Naive thymus-derived CD4-positive, alpha-beta T cell (primary cell): ENCODE measurements at regions of chr11 and their contacts with region 1.

Region 1: DNA sequence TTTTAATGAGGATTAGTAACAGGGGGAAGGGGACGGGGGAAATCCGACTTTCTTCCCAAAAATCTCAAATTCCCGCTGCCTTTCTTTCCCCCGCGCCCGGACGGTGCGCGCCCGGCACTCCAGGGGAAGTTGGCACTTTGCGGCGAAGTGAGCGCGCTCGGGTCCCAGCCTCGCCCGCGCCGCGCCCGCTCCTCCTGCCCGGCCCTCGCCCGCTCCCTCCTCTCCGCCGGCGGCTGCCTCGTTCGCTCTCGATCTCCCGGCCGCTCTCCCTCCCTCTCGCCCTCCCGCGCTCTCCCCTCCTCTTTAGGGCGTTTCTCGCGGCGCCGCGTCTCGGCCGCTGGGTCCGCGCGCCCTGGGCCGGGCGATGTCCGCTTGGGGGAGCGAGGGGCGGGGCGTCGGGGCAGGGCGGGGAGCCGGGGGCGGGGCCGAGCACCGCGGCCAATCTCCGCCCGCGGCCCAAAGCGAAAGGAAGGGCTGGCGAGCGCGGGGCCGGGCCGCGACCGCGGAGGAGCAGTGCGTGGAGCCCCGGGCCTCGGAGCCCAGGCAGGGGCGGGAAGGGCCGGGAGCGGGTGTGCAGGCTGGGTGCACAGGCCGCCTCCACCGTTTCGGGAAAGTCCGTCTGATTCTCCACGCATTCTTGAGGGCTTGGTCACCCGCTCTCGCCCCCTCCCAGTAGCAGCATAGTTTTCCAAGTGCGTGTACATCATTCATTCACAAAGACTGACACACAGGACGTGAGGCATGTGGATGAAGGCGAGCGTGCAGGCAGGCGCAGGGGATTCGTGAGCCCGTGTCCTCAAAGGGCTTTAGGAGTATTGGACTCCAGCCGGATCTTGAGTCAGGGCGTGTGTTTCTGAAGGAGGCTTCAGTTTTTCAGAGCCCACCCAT is 65.1 kb downstream of the ETS1 start:
- DNase-seq: peak; percentile 67 to 95 (median 84)
- ATAC-seq: peak; percentile 87
- H3K4me3 ChIP-seq: peak overlapping the region; percentile 96
- H3K4me3 Mint-ChIP-seq: peak overlapping the region; percentile 94 to 100 (median 98)
- H3K27ac ChIP-seq: peak overlapping the region; percentile 97
- H3K27ac Mint-ChIP-seq: peak overlapping the region; percentile 94 to 99 (median 98)
- H3K4me1 ChIP-seq: peaks cover 36 to 43% of the 10 kb centered on the region in 2 donors
- H3K4me1 Mint-ChIP-seq: peaks cover 35 to 52% (median 45%) of the 10 kb centered on the region in 7 donors
- H3K27me3 ChIP-seq: no peaks in the 10 kb centered on the region
- H3K27me3 Mint-ChIP-seq: peaks cover 0 to 3% (median 0%) of the 10 kb centered on the region in 5 donors

Region 2: GRCh38 chr11:128195057-128195751 is 327.1 kb before region 1 on chr11:
- CTCF ChIA-PET with region 1: interaction called, 3 read pairs
- POLR2A ChIA-PET with region 1: interaction called, 7 read pairs
- intact Hi-C with region 1: loop called in 1 of 2 experiments (anchors 1 kb)
- DNase-seq: peak in 7 of 9 donors; percentile 63 to 85 (median 76)
- ATAC-seq: peak; percentile 86
- H3K4me3 ChIP-seq: no peak overlapping the region
- H3K4me3 Mint-ChIP-seq: peak overlapping the region in 9 of 10 donors; percentile 1 to 67 (median 49)
- H3K27ac ChIP-seq: peak overlapping the region; percentile 17
- H3K27ac Mint-ChIP-seq: peak overlapping the region in 8 of 9 donors; percentile 72 to 87 (median 81)
- H3K4me1 ChIP-seq: peaks cover 31 to 33% of the 10 kb centered on the region in 2 donors
- H3K4me1 Mint-ChIP-seq: peaks cover 31 to 45% (median 41%) of the 10 kb centered on the region in 7 donors
- H3K27me3 ChIP-seq: no peaks in the 10 kb centered on the region
- H3K27me3 Mint-ChIP-seq: peaks cover 0 to 2% (median 0%) of the 10 kb centered on the region in 5 donors

Region 3: GRCh38 chr11:128271401-128271800 is 250.9 kb before region 1 on chr11:
- CTCF ChIA-PET with region 1: no interaction called
- POLR2A ChIA-PET with region 1: no interaction called
- intact Hi-C with region 1: no loop called
- DNase-seq: peak in 4 of 9 donors; percentile 29 to 58 (median 46)
- ATAC-seq: peak; percentile 79
- H3K4me3 ChIP-seq: no peak overlapping the region
- H3K4me3 Mint-ChIP-seq: peak overlapping the region in 5 of 10 donors; percentile 0 to 60 (median 30)
- H3K27ac ChIP-seq: no peak overlapping the region
- H3K27ac Mint-ChIP-seq: peak overlapping the region in 7 of 9 donors; percentile 12 to 88 (median 62)
- H3K4me1 ChIP-seq: peaks cover 0 to 5% of the 10 kb centered on the region in 2 donors
- H3K4me1 Mint-ChIP-seq: peaks cover 5 to 27% (median 22%) of the 10 kb centered on the region in 7 donors
- H3K27me3 ChIP-seq: no peaks in the 10 kb centered on the region
- H3K27me3 Mint-ChIP-seq: peaks cover 0 to 14% (median 0%) of the 10 kb centered on the region in 5 donors

Region 4: GRCh38 chr11:128482512-128483191 is 39.6 kb before region 1 on chr11:
- CTCF ChIA-PET with region 1: interaction called, 4 read pairs
- POLR2A ChIA-PET with region 1: interaction called, 155 read pairs
- intact Hi-C with region 1: no loop called
- DNase-seq: peak in 6 of 9 donors; percentile 62 to 86 (median 68)
- ATAC-seq: peak; percentile 74
- H3K4me3 ChIP-seq: peak overlapping the region; percentile 47
- H3K4me3 Mint-ChIP-seq: peak overlapping the region; percentile 73 to 99 (median 82)
- H3K27ac ChIP-seq: peak overlapping the region; percentile 97
- H3K27ac Mint-ChIP-seq: peak overlapping the region; percentile 92 to 99 (median 98)
- H3K4me1 ChIP-seq: peaks cover 89 to 95% of the 10 kb centered on the region in 2 donors
- H3K4me1 Mint-ChIP-seq: peaks cover 82 to 100% (median 99%) of the 10 kb centered on the region in 7 donors
- H3K27me3 ChIP-seq: no peaks in the 10 kb centered on the region
- H3K27me3 Mint-ChIP-seq: no peaks in the 10 kb centered on the region

Region 5: GRCh38 chr11:128532572-128533091 is 10.3 kb after region 1 on chr11:
- CTCF ChIA-PET with region 1: interaction called, 13 read pairs
- POLR2A ChIA-PET with region 1: interaction called, 380 read pairs
- intact Hi-C with region 1: loop called in 1 of 2 experiments (anchors 1 kb)
- DNase-seq: no peak
- ATAC-seq: no peak
- H3K4me3 ChIP-seq: no peak overlapping the region
- H3K4me3 Mint-ChIP-seq: no peak overlapping the region
- H3K27ac ChIP-seq: no peak overlapping the region
- H3K27ac Mint-ChIP-seq: peak overlapping the region in 3 of 9 donors; percentile 9 to 75 (median 18)
- H3K4me1 ChIP-seq: peaks cover 19 to 27% of the 10 kb centered on the region in 2 donors
- H3K4me1 Mint-ChIP-seq: peaks cover 29 to 74% (median 47%) of the 10 kb centered on the region in 7 donors
- H3K27me3 ChIP-seq: no peaks in the 10 kb centered on the region
- H3K27me3 Mint-ChIP-seq: peaks cover 0 to 12% (median 0%) of the 10 kb centered on the region in 5 donors

Region 6: DNA sequence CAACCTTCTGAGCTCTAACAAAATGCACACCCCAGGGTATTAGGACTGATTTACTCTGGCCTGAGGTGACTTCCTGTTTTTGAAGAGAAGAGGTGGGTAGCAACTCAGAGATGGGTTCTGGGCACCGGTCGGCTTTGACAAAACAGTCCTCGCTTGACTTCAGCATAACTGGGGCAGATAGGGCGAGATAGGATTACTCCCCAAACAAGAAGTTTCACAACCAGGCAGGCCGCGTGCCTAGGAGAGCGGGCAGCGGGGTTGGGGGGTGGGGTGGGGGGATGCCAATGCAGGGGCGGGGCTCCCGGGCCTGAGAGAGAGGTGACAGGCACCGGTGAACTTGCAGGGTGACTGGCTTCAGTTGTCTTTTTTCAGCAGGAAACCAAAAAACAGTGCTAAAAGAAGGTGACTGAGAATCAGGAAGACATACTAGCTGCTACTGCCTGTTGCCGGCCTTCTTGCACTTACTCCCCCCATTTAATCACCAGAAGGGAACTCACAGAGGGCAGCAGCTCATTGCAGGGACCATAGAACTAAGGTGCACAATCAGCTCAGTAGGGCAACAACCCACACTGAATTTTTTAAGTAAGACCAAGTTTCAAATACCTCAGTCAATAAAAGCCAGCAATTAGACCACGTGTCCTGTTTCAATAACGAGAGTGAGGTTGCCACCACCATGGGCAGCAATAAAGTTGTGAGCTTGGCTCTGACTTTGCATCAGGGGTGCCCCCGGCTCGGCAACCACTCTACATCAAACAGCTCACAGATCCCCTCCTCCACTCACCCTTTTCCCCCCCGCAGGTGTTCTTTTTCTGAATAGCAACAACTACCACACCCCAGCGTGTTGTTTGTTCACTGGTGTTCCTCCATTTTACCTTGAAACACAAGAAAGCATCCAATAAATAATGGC is 102.2 kb after region 1 on chr11:
- CTCF ChIA-PET with region 1: interaction called, 86 read pairs
- POLR2A ChIA-PET with region 1: interaction called, 546 read pairs
- intact Hi-C with region 1: loop called (anchors 1 kb)
- DNase-seq: peak; percentile 40 to 78 (median 66)
- ATAC-seq: peak; percentile 79
- H3K4me3 ChIP-seq: peak overlapping the region; percentile 32
- H3K4me3 Mint-ChIP-seq: peak overlapping the region; percentile 74 to 89 (median 82)
- H3K27ac ChIP-seq: peak overlapping the region; percentile 73
- H3K27ac Mint-ChIP-seq: peak overlapping the region; percentile 95 to 100 (median 98)
- H3K4me1 ChIP-seq: peaks cover 52 to 84% of the 10 kb centered on the region in 2 donors
- H3K4me1 Mint-ChIP-seq: peaks cover 82 to 100% (median 99%) of the 10 kb centered on the region in 7 donors
- H3K27me3 ChIP-seq: no peaks in the 10 kb centered on the region
- H3K27me3 Mint-ChIP-seq: no peaks in the 10 kb centered on the region

Region 7: GRCh38 chr11:128831174-128832120 is 309.1 kb after region 1 on chr11:
- CTCF ChIA-PET with region 1: interaction called, 3 read pairs
- POLR2A ChIA-PET with region 1: interaction called, 3 read pairs
- intact Hi-C with region 1: loop called (anchors 5 kb)
- DNase-seq: peak; percentile 68 to 85 (median 80)
- ATAC-seq: peak; percentile 90
- H3K4me3 ChIP-seq: peak overlapping the region; percentile 43
- H3K4me3 Mint-ChIP-seq: peak overlapping the region; percentile 61 to 87 (median 76)
- H3K27ac ChIP-seq: peak overlapping the region; percentile 67
- H3K27ac Mint-ChIP-seq: peak overlapping the region; percentile 58 to 98 (median 89)
- H3K4me1 ChIP-seq: peaks cover 11 to 15% of the 10 kb centered on the region in 2 donors
- H3K4me1 Mint-ChIP-seq: peaks cover 15 to 35% (median 24%) of the 10 kb centered on the region in 7 donors
- H3K27me3 ChIP-seq: no peaks in the 10 kb centered on the region
- H3K27me3 Mint-ChIP-seq: peaks cover 0 to 4% (median 0%) of the 10 kb centered on the region in 5 donors

Region 8: DNA sequence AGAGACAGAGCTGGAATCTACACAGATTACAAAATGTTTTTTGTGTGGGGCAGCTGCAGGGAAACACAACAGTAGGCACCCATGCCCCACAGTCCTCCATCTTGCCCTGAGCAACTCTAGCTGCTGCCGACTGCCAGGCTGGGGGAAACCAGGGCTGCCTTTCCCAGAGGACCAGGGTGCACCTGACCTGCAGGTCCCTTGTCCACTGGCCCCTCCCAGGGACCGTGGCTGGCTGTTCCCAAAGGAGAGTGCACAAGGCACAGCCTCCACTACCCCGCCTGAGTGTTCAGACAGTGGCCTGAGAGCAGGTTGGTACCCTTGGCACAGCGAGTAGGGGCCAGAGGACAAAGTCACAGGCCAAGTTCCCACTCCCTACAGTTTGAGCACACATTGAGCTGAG is 1035.1 kb after region 1 on chr11:
- CTCF ChIA-PET with region 1: no interaction called
- POLR2A ChIA-PET with region 1: no interaction called
- intact Hi-C with region 1: no loop called
- DNase-seq: no peak
- ATAC-seq: no peak
- H3K4me3 ChIP-seq: no peak overlapping the region
- H3K4me3 Mint-ChIP-seq: no peak overlapping the region
- H3K27ac ChIP-seq: no peak overlapping the region
- H3K27ac Mint-ChIP-seq: no peak overlapping the region
- H3K4me1 ChIP-seq: no peaks in the 10 kb centered on the region
- H3K4me1 Mint-ChIP-seq: no peaks in the 10 kb centered on the region
- H3K27me3 ChIP-seq: no peaks in the 10 kb centered on the region
- H3K27me3 Mint-ChIP-seq: peaks cover 0 to 40% (median 10%) of the 10 kb centered on the region in 5 donors